CD4-positive, alpha-beta memory T cell (primary cell): ENCODE measurements at regions of chr15 and their contacts with region 1.

Region 1: DNA sequence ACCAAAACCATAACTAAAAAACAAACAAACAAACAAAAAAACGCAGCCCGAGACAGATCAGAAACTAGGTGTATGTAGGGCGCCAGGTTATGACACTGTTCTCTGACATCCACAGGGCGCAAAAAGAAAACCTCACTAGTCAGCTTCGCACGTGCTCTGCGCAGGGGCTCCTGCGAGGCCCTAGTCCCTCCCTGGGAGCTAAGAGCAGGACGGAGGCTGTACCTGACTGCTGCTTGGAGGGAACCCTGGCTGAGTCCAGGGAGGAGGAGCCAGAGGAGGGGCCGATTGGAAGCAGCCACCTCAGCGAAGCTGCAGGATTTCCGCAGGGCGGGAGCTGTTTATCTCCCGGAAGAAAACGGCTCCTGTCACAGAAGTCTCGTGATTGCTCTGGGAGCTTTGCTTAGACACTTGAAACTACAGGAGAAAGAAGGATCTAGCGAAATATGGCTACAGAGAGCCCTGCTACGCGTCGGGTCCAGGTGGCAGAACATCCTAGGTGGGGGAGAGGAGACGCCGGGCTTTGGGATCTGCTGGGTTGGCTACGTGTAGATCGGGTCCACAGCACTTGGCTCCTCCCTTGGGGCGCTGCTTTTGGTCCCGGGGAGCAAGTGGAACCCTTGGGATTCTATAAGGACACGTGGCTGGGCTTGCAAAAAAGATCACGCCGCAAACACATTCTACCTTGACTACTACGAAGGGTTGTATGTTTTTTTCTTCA is at the start of gene GALK2:
- DNase-seq: peak; percentile 83 to 97 (median 85)
- H3K4me3 ChIP-seq: peak within 1 kb of the TSS; percentile 57 to 86
- H3K4me3 Mint-ChIP-seq: peak within 1 kb of the TSS; percentile 94 to 99 (median 98)
- H3K27ac ChIP-seq: peak within 1 kb of the TSS; percentile 80
- H3K27ac Mint-ChIP-seq: peak within 1 kb of the TSS; percentile 90 to 100 (median 98)
- H3K4me1 ChIP-seq: peaks cover 34% of the 10 kb centered on the region
- H3K4me1 Mint-ChIP-seq: peaks cover 26 to 50% (median 38%) of the 10 kb centered on the region in 4 donors
- H3K27me3 ChIP-seq: no peaks in the 10 kb centered on the region
- H3K27me3 Mint-ChIP-seq: no peaks in the 10 kb centered on the region
- total RNA-seq, gene GALK2: 30.7 to 31.5 TPM

Region 2: GRCh38 chr15:48877630-48878595 is 292.1 kb before region 1 on chr15 and contains the start of gene EID1:
- CTCF ChIA-PET with region 1: no interaction called
- POLR2A ChIA-PET with region 1: interaction called, 13 read pairs
- intact Hi-C with region 1: no loop called
- DNase-seq: peak; percentile 93 to 95 (median 94)
- H3K4me3 ChIP-seq: peak within 1 kb of the TSS; percentile 74 to 96
- H3K4me3 Mint-ChIP-seq: peak within 1 kb of the TSS; percentile 96 to 100 (median 98)
- H3K27ac ChIP-seq: peak within 1 kb of the TSS; percentile 71
- H3K27ac Mint-ChIP-seq: peak within 1 kb of the TSS; percentile 97 to 100 (median 99)
- H3K4me1 ChIP-seq: peaks cover 26% of the 10 kb centered on the region
- H3K4me1 Mint-ChIP-seq: peaks cover 18 to 31% (median 24%) of the 10 kb centered on the region in 4 donors
- H3K27me3 ChIP-seq: no peaks in the 10 kb centered on the region
- H3K27me3 Mint-ChIP-seq: peaks cover 3 to 4% of the 10 kb centered on the region in 2 donors
- total RNA-seq, gene EID1: 76.0 to 91.2 TPM